Lower leg skin (tissue), 4 donors: ENCODE measurements at regions of chr14 and their contacts with region 1.

Region 1: GRCh38 chr14:100108042-100108825 is 43.0 kb downstream of the EVL start:
- DNase-seq: peak; percentile 69 to 97
- H3K4me3 ChIP-seq: no peak overlapping the region
- CTCF ChIP-seq: peak in 1 of 3 donors; percentile 85
- POLR2A ChIP-seq: no peak

Region 2: GRCh38 chr14:99976666-99977065 is 131.6 kb before region 1 on chr14:
- intact Hi-C with region 1: loop called (anchors 5 kb)
- DNase-seq: no peak
- H3K4me3 ChIP-seq: no peak overlapping the region
- CTCF ChIP-seq: no peak
- POLR2A ChIP-seq: no peak